ENCODE measurements at regions of chr17 and their contacts with region 1.

Region 1: GRCh38 chr17:72191921-72192799 is 71.3 kb downstream of the SOX9 start:
- DNase-seq: no peak
- H3K4me3 ChIP-seq: no peak overlapping the region
- H3K27ac ChIP-seq: peak overlapping the region in 1 of 4 donors; percentile 46
- H3K4me1 ChIP-seq: no peaks in the 10 kb centered on the region
- H3K27me3 ChIP-seq: no peaks in the 10 kb centered on the region
- CTCF ChIP-seq: no peak
- EP300 ChIP-seq: no peak
- POLR2A ChIP-seq: no peak

Region 2: GRCh38 chr17:72011561-72011960 is 180.6 kb before region 1 on chr17:
- intact Hi-C with region 1: loop called (anchors 10 kb)
- DNase-seq: no peak
- H3K4me3 ChIP-seq: no peak overlapping the region
- H3K27ac ChIP-seq: no peak overlapping the region
- H3K4me1 ChIP-seq: no peaks in the 10 kb centered on the region
- H3K27me3 ChIP-seq: no peaks in the 10 kb centered on the region
- CTCF ChIP-seq: no peak
- EP300 ChIP-seq: no peak
- POLR2A ChIP-seq: no peak

Measured in sigmoid colon (tissue), 7 donors.